ENCODE measurements at regions of chr11 and their contacts with region 1.

Region 1: GRCh38 chr11:121321614-121322243 is 29.2 kb downstream of the SC5D start:
- DNase-seq: peak; percentile 36 to 86 (median 70)
- H3K4me3 ChIP-seq: no peak overlapping the region
- H3K27ac ChIP-seq: no peak overlapping the region
- H3K27me3 ChIP-seq: no peaks in the 10 kb centered on the region
- CTCF ChIP-seq: peak; percentile 30 to 94 (median 76)

Region 2: DNA sequence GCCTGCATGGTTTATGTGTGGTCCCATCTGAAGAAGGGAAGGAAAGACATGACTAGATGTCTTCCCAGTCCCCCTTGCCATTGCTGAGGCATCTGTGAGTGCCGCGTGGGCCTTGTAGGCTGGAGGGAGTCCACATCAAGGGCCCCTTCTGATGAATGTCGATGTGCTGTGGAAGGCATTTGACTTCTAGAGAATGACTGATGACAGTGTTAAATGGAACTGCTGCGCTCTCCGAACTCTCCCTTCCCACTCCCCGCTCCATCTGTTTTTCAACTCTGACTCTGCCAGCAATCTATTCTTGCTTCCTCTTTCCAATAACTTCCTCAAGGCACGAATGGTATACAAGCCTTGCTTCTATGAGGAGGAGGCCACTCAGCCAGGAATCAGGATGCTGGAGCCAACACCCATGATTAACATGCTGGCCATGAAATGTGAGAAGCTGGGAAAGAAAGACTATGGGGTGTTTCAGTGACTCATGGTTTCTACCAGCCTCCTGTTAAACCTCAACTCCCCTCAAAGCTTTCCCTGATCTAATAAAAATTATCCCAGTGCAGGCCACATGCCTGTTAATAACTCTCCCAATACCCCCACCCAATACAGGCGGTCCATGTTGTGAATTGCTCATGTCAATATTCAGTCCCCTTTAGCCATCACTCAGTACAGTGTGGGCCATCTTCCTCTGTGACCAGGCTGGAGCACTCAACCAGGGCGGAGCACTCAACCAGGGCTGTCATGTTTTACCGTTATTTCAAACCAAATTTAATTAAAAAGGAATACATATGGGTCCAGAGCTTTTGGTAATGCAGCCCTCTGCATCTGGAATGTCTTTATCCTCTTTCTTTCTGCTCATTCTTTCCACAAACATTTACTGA is 344.2 kb before region 1 on chr11:
- intact Hi-C with region 1: no loop called
- DNase-seq: peak in 1 of 10 donors; percentile 58
- H3K4me3 ChIP-seq: no peak overlapping the region
- H3K27ac ChIP-seq: peak overlapping the region in 6 of 59 donors; percentile 9 to 44 (median 20)
- H3K27me3 ChIP-seq: no peaks in the 10 kb centered on the region
- CTCF ChIP-seq: no peak

Region 3: DNA sequence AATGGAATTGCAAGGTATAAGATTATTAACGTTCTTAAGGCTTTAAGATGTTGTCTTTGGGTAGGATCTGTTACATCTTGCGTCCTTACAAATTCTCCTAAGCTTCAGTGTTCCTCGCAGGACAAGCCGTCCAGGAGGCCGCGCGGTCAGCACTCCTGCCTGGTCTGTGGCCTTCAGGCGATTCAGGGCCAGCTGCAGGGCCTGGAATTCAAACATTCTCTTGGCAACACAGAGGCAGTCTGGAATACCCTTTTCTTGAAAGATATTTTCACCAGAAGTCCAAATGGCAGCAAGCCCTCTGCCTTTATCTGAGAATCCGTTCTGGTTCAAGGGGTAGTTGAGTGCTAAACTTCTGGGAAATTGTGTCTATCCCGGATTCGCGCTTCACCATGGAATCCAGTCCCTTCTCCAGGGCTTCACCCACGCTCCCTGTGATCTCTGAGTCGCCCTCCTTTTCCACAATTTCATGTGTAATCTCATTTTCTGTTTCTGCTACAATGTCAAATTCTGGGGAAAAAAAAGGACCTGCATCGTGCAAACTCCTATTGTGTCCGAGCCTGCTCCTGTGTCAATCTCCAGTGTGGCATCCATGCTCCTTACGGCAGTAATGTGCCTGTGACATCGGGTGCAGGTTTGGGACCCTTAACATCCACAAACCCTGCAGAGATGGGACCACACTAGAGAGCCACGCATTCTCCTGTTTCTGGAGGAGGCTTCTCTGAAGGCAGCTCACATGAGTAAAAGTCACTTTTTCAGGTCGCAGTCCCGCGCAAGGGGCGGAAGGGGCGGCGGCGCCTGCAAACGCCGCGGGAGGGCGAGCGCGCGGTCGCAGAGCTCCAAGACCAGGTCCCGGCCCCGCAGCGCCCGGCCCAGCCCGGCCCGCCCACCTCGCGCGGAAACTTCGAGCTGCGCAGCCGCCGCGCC is 105.0 kb after region 1 on chr11:
- intact Hi-C with region 1: loop called in 1 of 2 experiments (anchors 10 kb)
- DNase-seq: peak in 6 of 10 donors; percentile 25 to 68 (median 47)
- H3K4me3 ChIP-seq: peak overlapping the region in 58 of 59 donors; percentile 16 to 68 (median 50)
- H3K27ac ChIP-seq: peak overlapping the region in 16 of 59 donors; percentile 1 to 73 (median 20)
- H3K27me3 ChIP-seq: no peaks in the 10 kb centered on the region
- CTCF ChIP-seq: peak in 24 of 56 donors; percentile 11 to 55 (median 26)

Region 4: DNA sequence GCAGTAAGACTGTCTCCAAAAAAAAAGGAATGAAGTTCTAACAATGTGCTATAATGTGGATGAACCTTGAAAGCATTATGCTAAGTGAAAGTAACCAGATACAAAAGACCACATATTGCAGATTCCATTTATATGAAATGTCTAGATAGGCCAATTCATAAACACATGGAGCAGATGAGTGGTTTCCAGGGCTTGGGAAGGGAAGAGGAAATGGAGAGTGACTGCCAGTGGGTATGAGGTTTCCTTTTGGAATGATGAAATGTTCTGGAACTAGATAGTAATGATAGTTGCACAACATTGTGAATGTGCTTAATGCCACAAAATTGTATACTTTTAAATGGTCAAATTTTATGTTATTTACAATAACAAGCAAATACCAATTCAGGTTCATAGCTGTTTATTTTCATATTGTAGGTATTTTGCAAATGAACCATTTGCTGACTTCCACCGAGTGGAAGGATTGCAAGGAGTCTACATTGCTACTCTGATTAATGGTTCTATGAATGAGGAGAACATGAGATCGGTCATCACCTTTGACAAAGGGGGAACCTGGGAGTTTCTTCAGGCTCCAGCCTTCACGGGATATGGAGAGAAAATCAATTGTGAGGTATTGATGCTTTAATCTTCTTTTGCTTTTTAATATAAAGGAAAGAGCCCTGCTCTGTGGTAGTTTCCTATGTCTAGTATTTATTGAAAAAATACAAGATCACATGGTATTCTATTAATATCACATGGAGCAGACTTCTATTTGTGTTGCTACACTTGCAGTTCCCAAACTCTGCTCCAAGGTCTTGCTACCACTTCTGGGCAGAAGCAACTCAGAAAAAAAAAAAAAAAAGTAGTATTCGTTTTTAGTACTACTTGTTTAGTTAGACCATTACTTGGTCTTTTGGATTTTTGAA is 198.8 kb after region 1 on chr11:
- intact Hi-C with region 1: no loop called
- DNase-seq: no peak
- H3K4me3 ChIP-seq: no peak overlapping the region
- H3K27ac ChIP-seq: peak overlapping the region in 19 of 59 donors; percentile 1 to 76 (median 30)
- H3K27me3 ChIP-seq: no peaks in the 10 kb centered on the region
- CTCF ChIP-seq: no peak

Region 5: DNA sequence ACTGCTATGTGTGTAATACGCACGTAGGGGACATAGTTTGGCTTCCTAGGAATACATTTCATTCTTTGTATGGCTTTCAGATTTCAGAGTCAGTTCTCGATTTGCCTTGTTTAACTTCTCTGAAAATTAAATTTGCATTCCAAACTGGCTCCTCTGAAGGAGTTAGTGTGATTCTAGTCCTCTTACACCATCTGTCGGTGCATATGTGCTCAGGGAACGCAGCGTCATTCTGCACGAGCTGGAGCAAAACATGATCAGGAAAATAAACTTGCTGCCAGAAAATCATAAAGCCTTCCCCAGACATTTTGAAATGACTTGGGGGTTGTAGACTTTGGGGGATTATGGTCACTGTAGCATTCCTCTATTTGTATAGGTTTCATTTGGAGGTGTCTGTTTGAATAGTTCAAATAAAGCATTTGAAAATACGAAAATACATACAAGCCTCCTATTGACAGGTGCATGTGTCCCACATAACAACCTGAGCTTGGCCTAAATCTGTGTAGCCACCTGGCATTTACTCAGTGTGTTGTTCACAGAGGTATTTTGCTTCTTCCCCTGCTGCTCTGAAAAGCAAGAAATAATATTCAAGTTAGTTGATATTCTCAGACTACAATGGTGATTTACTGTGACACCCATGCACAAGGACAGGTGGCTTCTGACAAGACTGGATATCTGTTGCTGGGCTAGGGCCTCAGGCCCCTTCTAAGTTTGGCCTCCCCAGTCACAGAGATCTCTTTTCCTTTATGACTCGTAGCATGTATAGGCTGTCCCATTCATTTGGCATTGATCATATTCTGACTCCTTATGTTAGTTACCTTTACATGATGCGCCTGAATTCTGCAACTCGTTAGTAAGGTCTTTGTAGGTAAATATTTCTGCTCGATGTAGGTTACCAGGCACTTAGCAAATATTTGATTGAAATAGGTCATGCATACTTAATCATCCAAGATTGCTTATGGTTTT is 212.7 kb after region 1 on chr11:
- intact Hi-C with region 1: loop called (anchors 1 to 2 kb)
- DNase-seq: peak in 7 of 10 donors; percentile 41 to 76 (median 66)
- H3K4me3 ChIP-seq: peak overlapping the region in 11 of 59 donors; percentile 0 to 35 (median 19)
- H3K27ac ChIP-seq: peak overlapping the region in 49 of 59 donors; percentile 1 to 94 (median 54)
- H3K27me3 ChIP-seq: no peaks in the 10 kb centered on the region
- CTCF ChIP-seq: peak in 55 of 56 donors; percentile 41 to 84 (median 64)

Region 6: GRCh38 chr11:121591405-121592033 is 269.8 kb after region 1 on chr11:
- intact Hi-C with region 1: loop called (anchors 1 to 2 kb)
- DNase-seq: peak in 6 of 10 donors; percentile 59 to 81 (median 68)
- H3K4me3 ChIP-seq: no peak overlapping the region
- H3K27ac ChIP-seq: peak overlapping the region in 52 of 59 donors; percentile 1 to 84 (median 62)
- H3K27me3 ChIP-seq: no peaks in the 10 kb centered on the region
- CTCF ChIP-seq: peak; percentile 81 to 96 (median 93)

Region 7: DNA sequence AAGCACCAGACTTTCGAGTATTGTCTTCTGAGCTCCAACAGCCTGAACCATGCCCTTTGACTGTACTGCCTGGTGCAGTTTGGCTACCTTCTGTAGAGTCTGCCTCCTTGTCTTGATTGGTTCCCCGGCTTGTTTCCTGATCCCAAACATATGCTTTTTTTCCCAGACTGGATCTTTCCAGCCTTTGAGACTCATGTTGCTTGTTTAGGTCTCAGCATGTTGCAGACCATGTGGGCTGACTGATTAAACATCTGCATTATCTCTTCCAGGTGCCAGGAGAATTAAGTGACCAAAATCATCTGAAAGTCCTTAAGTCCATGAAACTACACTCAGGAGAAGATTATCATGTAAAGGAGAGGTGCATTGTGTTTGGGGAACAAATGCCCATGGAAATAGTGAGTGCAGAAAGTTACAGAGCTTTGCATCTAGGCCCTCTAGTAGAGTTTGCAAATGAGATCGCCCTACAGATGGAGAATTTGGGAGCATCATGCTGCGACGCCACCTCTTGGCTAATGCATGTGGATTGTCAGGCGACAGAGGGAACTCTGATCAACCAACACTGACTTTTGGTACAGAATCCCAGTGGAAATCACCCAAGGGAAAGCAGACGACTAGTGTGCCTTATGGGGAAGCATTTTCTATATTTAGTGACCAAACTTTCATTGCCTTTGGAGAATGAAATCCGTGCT is 605.5 kb after region 1 on chr11:
- intact Hi-C with region 1: no loop called
- DNase-seq: no peak
- H3K4me3 ChIP-seq: no peak overlapping the region
- H3K27ac ChIP-seq: peak overlapping the region in 2 of 59 donors; percentile 27 to 89
- H3K27me3 ChIP-seq: no peaks in the 10 kb centered on the region
- CTCF ChIP-seq: no peak